H1 (cell line): ENCODE measurements at regions of chr2 and their contacts with region 1.

Region 1: GRCh38 chr2:38417745-38418689 is 40.9 kb upstream of the ATL2 start:
- DNase-seq: no peak
- H3K4me3 ChIP-seq: no peak overlapping the region
- H3K27ac ChIP-seq: no peak overlapping the region
- H3K4me1 ChIP-seq: no peaks in the 10 kb centered on the region
- H3K27me3 ChIP-seq: no peaks in the 10 kb centered on the region
- CTCF ChIP-seq: no peak
- EP300 ChIP-seq: no peak
- POLR2A ChIP-seq: no peak
- RAD21 ChIP-seq: no peak

Region 2: DNA sequence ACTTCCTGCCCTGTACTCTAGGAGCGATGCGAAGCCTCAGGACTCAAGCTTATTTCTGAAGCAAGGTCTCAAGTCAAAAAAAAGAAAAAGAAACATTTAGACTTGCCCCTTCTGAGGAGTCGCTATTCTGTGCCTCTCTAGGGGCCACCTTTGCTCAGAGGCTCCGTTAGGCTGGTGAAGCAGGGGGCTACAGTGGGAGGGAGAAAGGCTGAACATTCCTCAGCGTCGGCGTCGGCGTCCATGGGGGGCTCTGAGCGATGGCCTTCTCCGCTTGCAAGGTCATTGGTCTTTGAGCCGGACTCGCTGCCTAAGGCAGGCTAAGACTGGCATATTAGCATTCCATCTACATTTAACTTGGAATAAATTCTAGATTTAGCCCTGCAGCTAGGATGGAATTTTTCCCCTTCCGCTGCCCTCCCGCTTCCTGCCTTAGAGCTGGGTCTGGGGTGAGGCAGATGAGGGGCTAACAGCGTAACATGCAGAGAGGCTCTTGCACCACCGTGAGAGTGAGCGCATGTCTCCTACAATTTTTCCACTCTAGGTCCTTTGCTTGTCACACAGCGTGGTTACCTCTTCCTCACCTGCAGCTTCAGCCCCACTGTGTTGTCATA is 12.7 kb after region 1 on chr2:
- CTCF ChIA-PET with region 1: interaction called, 14 read pairs
- POLR2A ChIA-PET with region 1: no interaction called
- DNase-seq: no peak
- H3K4me3 ChIP-seq: no peak overlapping the region
- H3K27ac ChIP-seq: no peak overlapping the region
- H3K4me1 ChIP-seq: peaks cover 5 to 25% (median 19%) of the 10 kb centered on the region in 4 experiments
- H3K27me3 ChIP-seq: no peaks in the 10 kb centered on the region
- CTCF ChIP-seq: no peak
- EP300 ChIP-seq: no peak
- POLR2A ChIP-seq: no peak
- RAD21 ChIP-seq: no peak